A673 (cell line): ENCODE measurements at regions of chr18 and their contacts with region 1.

Region 1: GRCh38 chr18:75264195-75264594 is 53.6 kb downstream of the TSHZ1 start:
- DNase-seq: no peak
- H3K4me3 ChIP-seq: no peak overlapping the region
- H3K27ac ChIP-seq: no peak overlapping the region
- H3K4me1 ChIP-seq: no peaks in the 10 kb centered on the region
- H3K27me3 ChIP-seq: no peaks in the 10 kb centered on the region
- CTCF ChIP-seq: no peak

Region 2: DNA sequence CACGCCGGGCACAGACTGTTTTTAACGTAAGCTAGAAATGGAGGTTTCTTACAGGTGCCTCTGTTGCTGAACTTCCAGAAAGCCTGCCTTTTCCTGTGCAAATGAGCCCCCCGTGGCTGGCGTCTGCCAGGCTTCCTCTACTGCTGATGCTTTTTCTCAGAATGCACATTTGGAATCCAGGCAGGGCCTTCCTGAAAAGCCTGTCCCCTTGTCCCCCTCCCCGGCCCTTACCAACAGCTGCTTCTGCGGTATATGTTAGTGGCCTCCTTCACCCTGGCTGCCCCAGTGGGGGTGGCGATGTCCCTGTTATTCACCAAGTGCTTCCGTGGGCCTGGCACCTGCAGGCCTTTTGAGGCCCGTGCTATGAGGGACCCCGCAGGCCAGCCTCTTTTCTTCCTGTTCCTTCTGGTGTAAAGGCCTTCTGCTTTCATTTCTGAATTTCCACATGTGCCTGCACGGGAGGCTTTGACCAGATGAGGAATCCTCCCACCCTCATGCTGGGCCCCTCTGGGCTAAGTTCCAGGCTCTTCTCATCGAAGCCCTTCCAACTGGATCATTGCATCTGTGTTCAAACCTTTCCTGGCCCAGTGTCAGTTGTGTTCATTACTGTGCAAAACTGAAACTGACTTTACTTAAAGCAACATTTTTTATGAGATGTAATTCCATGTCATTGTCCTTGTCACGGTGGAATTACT is 757.6 kb before region 1 on chr18:
- CTCF ChIA-PET with region 1: no interaction called
- POLR2A ChIA-PET with region 1: interaction called, 16 read pairs
- intact Hi-C with region 1: no loop called
- DNase-seq: no peak
- H3K4me3 ChIP-seq: no peak overlapping the region
- H3K27ac ChIP-seq: no peak overlapping the region
- H3K4me1 ChIP-seq: no peaks in the 10 kb centered on the region
- H3K27me3 ChIP-seq: no peaks in the 10 kb centered on the region
- CTCF ChIP-seq: no peak

Region 3: DNA sequence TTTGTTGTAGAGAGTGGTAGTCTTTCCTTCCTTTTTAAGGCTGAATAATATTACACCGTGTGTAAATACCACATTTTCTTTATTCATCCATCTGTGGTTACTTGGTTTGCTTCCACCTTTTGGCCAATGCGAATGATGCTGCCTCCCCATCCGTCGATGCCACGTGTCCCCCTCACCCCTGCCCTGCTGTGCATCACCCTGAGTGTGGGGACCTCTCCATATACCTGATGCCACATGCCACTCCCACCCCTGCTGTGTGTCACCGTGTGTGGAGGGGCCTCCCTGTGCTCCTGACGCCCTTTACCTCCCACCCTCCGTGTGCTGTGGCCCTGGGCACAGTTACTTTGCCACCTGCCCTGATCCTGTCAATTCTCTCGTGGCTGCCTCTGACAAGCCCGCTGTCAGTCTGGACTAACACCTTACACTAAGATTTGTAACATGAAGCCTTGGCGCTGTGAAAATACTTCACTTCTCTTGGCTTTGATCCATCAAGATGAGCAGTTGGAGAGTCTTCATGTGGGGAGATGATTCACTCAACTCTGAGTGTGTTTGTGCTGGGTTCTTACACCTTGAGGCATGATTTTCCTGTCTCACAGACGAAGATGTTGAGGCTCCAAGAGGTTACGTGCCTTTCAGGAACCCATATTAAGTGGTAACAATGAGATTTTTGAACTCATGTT is 432.5 kb before region 1 on chr18:
- CTCF ChIA-PET with region 1: no interaction called
- POLR2A ChIA-PET with region 1: no interaction called
- intact Hi-C with region 1: no loop called
- DNase-seq: no peak
- H3K4me3 ChIP-seq: no peak overlapping the region
- H3K27ac ChIP-seq: no peak overlapping the region
- H3K4me1 ChIP-seq: no peaks in the 10 kb centered on the region
- H3K27me3 ChIP-seq: no peaks in the 10 kb centered on the region
- CTCF ChIP-seq: no peak

Region 4: DNA sequence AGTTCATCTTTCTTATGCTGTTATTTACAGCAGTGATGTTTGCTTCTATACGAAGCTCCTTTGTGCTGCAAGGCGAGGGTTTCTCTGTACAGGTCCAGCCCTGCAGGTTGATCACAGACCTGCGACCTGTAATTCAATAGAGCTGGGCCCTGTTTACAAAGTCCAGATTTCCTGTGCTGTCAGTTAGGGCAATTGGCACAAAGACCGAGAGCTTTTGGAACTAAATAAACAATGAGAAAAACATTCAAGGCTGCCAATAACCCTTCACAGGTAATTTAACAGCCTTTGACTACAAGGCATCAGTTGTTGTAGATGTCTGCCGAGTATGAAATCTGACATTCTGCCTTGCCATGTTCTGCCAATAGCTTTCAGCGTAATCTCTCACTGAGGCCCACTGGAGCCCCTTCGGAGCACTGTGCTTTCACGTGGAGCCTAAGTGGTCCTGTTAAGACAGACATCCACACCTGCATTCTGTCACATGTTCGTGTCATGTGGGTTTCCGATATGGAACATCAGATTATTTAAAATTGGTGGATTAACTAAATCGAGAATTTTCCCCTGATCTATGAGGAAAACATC is 287.8 kb before region 1 on chr18:
- CTCF ChIA-PET with region 1: no interaction called
- POLR2A ChIA-PET with region 1: no interaction called
- intact Hi-C with region 1: no loop called
- DNase-seq: no peak
- H3K4me3 ChIP-seq: no peak overlapping the region
- H3K27ac ChIP-seq: no peak overlapping the region
- H3K4me1 ChIP-seq: no peaks in the 10 kb centered on the region
- H3K27me3 ChIP-seq: no peaks in the 10 kb centered on the region
- CTCF ChIP-seq: no peak